Activated CD4-positive, alpha-beta T cell treated with anti-CD3 and anti-CD28 coated beads for 36 hours (primary cell): ENCODE measurements at regions of chr2 and their contacts with region 1.

Region 1: GRCh38 chr2:72993147-72993932 is 76.0 kb downstream of the EMX1 start:
- DNase-seq: peak; percentile 50
- ATAC-seq: peak; percentile 42
- H3K4me3 Mint-ChIP-seq: no peak overlapping the region
- H3K27ac Mint-ChIP-seq: no peak overlapping the region
- H3K4me1 Mint-ChIP-seq: no peaks in the 10 kb centered on the region
- H3K27me3 Mint-ChIP-seq: no peaks in the 10 kb centered on the region

Region 2: GRCh38 chr2:72511906-72512305 is 481.4 kb before region 1 on chr2:
- CTCF ChIA-PET with region 1: no interaction called
- POLR2A ChIA-PET with region 1: no interaction called
- intact Hi-C with region 1: no loop called
- DNase-seq: no peak
- ATAC-seq: no peak
- H3K4me3 Mint-ChIP-seq: no peak overlapping the region
- H3K27ac Mint-ChIP-seq: no peak overlapping the region
- H3K4me1 Mint-ChIP-seq: no peaks in the 10 kb centered on the region
- H3K27me3 Mint-ChIP-seq: no peaks in the 10 kb centered on the region

Region 3: DNA sequence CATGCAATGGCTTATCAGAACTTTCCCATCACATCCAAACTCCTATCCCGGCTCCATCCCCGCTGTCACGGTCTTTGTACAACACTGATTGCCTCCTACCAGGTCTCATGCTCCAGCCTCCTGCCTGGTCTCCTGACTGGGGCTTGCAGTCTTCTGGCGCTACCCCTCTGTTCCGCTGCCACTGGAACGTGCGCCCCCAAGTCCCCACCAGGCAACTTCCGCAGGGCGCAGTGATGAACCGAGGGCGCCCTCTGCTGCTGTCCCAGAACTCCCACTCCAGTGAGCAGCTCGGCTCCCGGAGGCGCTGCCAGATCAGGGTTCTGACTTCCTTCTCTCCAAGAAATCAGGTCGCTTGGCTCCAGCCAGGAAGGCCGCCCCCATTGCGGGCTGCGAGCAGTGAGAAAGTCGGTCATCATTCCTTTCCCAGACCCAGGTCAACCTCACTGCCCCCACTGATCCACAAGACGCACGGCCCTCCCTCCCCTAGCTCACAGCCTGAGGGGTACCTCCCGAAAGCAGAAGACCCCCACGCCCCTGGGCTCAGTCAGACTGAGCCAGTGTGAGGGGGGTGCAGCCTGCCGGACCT is 163.3 kb after region 1 on chr2:
- CTCF ChIA-PET with region 1: interaction called, 8 read pairs
- POLR2A ChIA-PET with region 1: no interaction called
- intact Hi-C with region 1: loop called in 1 of 2 experiments (anchors 1 kb)
- DNase-seq: peak; percentile 73
- ATAC-seq: peak; percentile 61
- H3K4me3 Mint-ChIP-seq: no peak overlapping the region
- H3K27ac Mint-ChIP-seq: no peak overlapping the region
- H3K4me1 Mint-ChIP-seq: no peaks in the 10 kb centered on the region
- H3K27me3 Mint-ChIP-seq: peaks cover 31% of the 10 kb centered on the region

Region 4: DNA sequence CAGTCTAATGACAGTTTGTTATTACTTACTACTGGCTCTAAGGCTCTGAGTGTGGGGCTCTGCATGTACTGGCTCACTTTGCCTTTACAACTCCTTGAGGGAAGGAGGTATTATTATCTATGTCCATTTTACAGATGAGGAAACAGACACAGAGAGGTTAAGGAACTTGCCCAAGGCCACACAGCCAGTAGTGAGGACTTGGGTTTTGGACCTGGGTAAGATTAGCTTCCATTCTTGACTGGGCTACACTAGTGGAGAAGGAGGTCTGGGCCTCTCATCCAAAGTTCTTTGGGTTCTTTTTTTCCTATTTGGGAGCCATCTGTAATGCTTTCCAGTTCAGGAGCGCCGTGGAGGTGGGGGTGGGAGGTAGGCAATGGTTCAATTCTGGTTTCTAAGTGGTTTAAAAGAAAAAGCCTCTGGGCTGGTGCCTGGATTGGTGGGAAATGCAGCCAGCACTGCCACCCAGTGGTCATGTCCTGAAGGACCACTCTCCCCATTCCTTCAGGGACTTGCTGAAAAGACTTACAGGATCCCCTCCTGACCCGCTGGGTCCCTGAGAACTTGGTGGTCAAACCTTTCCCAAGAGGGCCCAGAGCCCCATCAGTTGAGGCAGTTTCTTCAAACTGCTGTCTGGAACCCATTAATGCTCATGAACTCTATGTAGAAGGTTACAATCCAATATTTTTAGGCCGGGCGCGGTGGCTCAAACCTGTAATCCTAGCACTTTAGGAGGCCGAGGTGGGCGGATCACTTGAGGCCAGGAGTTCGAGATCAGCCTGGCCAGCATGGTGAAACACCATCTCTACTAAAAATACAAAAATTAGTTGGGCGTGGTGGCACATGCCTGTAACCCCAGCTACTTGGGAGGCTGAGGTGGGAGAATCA is 170.4 kb after region 1 on chr2:
- CTCF ChIA-PET with region 1: interaction called, 9 read pairs
- POLR2A ChIA-PET with region 1: no interaction called
- intact Hi-C with region 1: loop called (anchors 1 kb)
- DNase-seq: peak; percentile 81
- ATAC-seq: peak; percentile 97
- H3K4me3 Mint-ChIP-seq: no peak overlapping the region
- H3K27ac Mint-ChIP-seq: no peak overlapping the region
- H3K4me1 Mint-ChIP-seq: no peaks in the 10 kb centered on the region
- H3K27me3 Mint-ChIP-seq: peaks cover 11% of the 10 kb centered on the region